ENCODE measurements at regions of chr2 and their contacts with region 1.

Region 1: DNA sequence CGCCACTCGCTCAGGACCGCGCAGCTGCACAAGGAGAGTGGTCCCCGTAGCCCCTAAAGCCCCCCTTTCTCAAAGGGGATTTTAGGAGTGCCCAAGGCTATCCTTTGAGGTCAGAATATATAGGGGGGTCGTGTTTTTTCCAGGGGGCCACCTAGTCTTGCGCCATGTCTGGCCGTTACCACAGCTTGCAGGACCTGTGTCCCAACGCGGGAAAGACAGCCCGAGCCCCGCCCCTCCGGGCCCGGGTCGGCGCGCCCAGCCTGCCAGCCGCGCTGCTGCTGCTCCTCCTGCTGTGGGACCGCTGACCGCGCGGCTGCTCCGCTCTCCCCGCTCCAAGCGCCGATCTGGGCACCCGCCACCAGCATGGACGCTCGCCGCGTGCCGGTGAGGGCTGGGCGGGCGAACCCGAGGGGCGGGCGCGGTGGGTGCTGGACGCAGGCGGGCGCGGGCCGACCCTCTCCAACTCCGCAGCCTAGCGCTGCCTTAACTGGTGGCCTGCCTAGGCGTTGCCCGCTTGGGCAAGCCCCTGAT is at the start of gene CDCA7:
- DNase-seq: peak; percentile 80
- total RNA-seq, gene CDCA7: 1.00 TPM

Region 2: DNA sequence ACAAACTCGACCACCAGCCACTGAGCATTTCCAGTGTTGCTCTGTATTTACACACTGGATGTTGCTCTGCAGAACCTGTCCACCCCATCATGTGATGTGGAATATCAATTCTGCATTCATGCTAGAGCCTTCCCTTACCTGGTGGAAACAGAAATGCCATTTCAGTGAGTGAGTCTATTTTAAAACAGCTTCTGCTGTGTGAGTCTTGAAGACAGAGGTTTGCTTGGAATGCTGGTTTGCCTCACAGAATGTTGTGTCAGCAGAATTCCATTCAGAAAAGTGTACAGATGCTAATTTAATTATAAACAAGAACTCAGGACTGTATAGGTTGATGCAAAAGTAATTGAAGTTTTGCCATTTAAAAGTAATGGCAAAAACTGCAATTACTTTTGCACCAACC is 160.7 kb before region 1 on chr2:
- intact Hi-C with region 1: no loop called
- DNase-seq: no peak

Region 3: DNA sequence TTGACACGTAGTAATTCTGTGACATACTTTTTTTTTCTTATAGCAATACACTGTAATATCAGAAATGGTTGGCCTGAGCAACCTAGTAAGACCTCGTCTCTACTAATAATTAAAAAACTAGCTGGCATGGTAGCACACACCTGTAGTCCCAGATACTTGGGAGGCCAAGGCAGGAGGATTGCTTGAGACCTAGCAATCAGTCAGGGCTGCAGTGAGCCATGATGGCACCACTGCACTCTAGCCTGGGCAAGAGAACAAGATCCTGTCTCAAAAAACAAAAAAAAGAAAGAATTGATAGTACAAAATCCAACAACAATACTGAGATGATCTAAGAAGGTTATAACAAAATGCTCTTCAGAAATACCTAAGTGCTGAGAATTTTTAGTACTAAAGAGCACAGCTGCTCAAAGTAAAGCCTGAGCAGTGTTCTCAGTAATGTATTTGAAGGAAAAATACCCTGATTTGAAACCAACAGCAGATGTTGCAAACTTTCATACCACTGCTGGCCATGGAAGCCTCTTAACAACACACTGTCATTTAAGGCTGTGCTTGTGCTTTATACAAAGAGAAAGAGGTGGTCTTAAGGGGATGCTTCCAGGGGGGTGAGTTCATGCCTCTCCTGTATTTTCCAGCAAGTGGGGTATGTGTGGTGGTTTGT is 132.6 kb before region 1 on chr2:
- intact Hi-C with region 1: loop called (anchors 10 kb)
- DNase-seq: no peak

Region 4: GRCh38 chr2:173472112-173472511 is 117.4 kb after region 1 on chr2:
- intact Hi-C with region 1: no loop called
- DNase-seq: no peak

Measured in cardiac septum (tissue), 1 donor.